Endothelial cell of umbilical vein (primary cell): ENCODE measurements at regions of chr5 and their contacts with region 1.

Region 1: GRCh38 chr5:82799361-82800080 is 277.7 kb downstream of the TMEM167A start:
- DNase-seq: no peak
- H3K4me3 ChIP-seq: no peak overlapping the region
- H3K27ac ChIP-seq: no peak overlapping the region
- H3K4me1 ChIP-seq: no peaks in the 10 kb centered on the region
- H3K27me3 ChIP-seq: peaks cover 4 to 10% of the 10 kb centered on the region in 2 experiments
- CTCF ChIP-seq: no peak
- POLR2A ChIP-seq: no peak

Region 2: GRCh38 chr5:83564069-83564749 is 764.7 kb after region 1 on chr5:
- CTCF ChIA-PET with region 1: no interaction called
- POLR2A ChIA-PET with region 1: no interaction called
- dilution Hi-C with region 1: no loop called
- intact Hi-C with region 1: loop called (anchors 2 kb)
- DNase-seq: peak; percentile 81
- H3K4me3 ChIP-seq: no peak overlapping the region
- H3K27ac ChIP-seq: no peak overlapping the region
- H3K4me1 ChIP-seq: peaks cover 4% of the 10 kb centered on the region
- H3K27me3 ChIP-seq: peaks cover 0 to 8% of the 10 kb centered on the region in 2 experiments
- CTCF ChIP-seq: peak; percentile 16 to 24
- POLR2A ChIP-seq: no peak